ENCODE measurements at regions of chrX and their contacts with region 1.

Region 1: GRCh38 chrX:45515262-45516215 is 314.9 kb upstream of the DIPK2B start:
- DNase-seq: peak; percentile 62
- ATAC-seq: peak; percentile 66
- H3K4me3 ChIP-seq: no peak overlapping the region
- H3K27ac ChIP-seq: peak overlapping the region; percentile 91
- H3K4me1 ChIP-seq: peaks cover 32 to 62% of the 10 kb centered on the region in 2 experiments
- H3K27me3 ChIP-seq: no peaks in the 10 kb centered on the region
- CTCF ChIP-seq: peak in 2 of 3 experiments; percentile 55 to 63; a peak in 4 of 6 replicates
- POLR2A ChIP-seq: no peak
- RAD21 ChIP-seq: no peak

Region 2: GRCh38 chrX:45322382-45322781 is 193.2 kb before region 1 on chrX:
- CTCF ChIA-PET with region 1: interaction called, 3 read pairs
- POLR2A ChIA-PET with region 1: interaction called, 3 read pairs
- RAD21 ChIA-PET with region 1: no interaction called
- intact Hi-C with region 1: loop called (anchors 2 kb)
- DNase-seq: peak; percentile 51
- ATAC-seq: peak; percentile 49
- H3K4me3 ChIP-seq: no peak overlapping the region
- H3K27ac ChIP-seq: peak overlapping the region; percentile 76; the same call in 1 of the 2 replicates
- H3K4me1 ChIP-seq: peaks cover 8 to 31% of the 10 kb centered on the region in 2 experiments; a peak in 3 of 4 replicates
- H3K27me3 ChIP-seq: no peaks in the 10 kb centered on the region
- CTCF ChIP-seq: peak; percentile 19 to 40 (median 22); a peak in 3 of 6 replicates
- POLR2A ChIP-seq: no peak
- RAD21 ChIP-seq: peak; percentile 81

Region 3: GRCh38 chrX:45743081-45743533 is 227.6 kb after region 1 on chrX:
- CTCF ChIA-PET with region 1: interaction called, 3 read pairs
- POLR2A ChIA-PET with region 1: interaction called, 7 read pairs
- RAD21 ChIA-PET with region 1: no interaction called
- intact Hi-C with region 1: loop called (anchors 2 kb)
- DNase-seq: peak; percentile 76
- ATAC-seq: peak; percentile 79
- H3K4me3 ChIP-seq: no peak overlapping the region
- H3K27ac ChIP-seq: peak overlapping the region; percentile 94
- H3K4me1 ChIP-seq: peaks cover 12 to 63% of the 10 kb centered on the region in 2 experiments
- H3K27me3 ChIP-seq: no peaks in the 10 kb centered on the region
- CTCF ChIP-seq: peak in 2 of 3 experiments; percentile 46 to 50; a peak in 4 of 6 replicates
- POLR2A ChIP-seq: no peak
- RAD21 ChIP-seq: no peak

Region 4: GRCh38 chrX:45824471-45824870 is 308.9 kb after region 1 on chrX:
- CTCF ChIA-PET with region 1: no interaction called
- POLR2A ChIA-PET with region 1: no interaction called
- RAD21 ChIA-PET with region 1: no interaction called
- intact Hi-C with region 1: loop called (anchors 1 kb)
- DNase-seq: peak; percentile 89
- ATAC-seq: peak; percentile 84
- H3K4me3 ChIP-seq: no peak overlapping the region
- H3K27ac ChIP-seq: peak overlapping the region; percentile 57; the same call in 1 of the 2 replicates
- H3K4me1 ChIP-seq: peaks cover 40 to 94% of the 10 kb centered on the region in 2 experiments
- H3K27me3 ChIP-seq: no peaks in the 10 kb centered on the region
- CTCF ChIP-seq: peak; percentile 31 to 72 (median 71); a peak in 5 of 6 replicates
- POLR2A ChIP-seq: no peak
- RAD21 ChIP-seq: peak; percentile 75

Region 5: DNA sequence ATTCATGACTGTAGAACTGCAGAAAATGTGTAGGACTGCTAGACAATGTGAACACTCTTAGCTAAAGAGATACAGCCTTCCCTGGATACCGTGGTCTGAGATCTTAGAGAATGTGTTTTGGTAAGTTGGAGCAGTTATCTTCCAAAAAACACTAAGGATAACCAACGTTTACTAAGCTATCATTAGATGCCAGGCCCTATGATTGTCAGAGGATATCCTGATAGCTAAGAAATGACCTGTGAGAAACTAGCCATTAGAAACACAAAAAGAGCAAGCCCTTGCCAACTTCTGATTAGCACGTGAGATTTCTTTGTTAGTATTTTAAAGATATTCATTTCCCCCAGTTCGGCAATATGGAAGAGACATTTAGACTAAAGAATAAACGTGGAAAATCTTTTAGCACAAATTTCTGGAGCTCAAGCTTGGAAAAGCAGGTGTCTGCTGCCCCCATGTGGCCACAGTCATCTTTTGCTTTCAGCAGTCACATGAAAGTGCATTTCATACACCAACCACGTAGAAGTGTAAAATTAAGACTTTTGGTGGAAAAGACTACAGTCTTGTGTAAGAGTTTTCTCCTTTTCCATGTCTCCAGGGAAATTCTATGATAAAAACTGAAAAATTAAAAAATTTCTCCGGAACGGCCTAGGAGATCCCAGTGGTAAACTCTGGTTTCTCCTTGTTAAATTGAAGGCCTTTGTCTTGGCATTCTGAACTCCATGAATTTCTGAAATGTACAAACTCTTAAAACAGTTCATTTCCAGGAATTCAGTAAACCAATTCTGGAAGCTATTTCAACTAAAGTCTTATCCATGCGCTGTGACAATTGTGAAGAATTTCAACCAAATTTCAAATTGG is 893.2 kb after region 1 on chrX:
- CTCF ChIA-PET with region 1: interaction called, 8 read pairs
- POLR2A ChIA-PET with region 1: no interaction called
- RAD21 ChIA-PET with region 1: no interaction called
- intact Hi-C with region 1: loop called (anchors 2 kb)
- DNase-seq: peak; percentile 42
- ATAC-seq: peak; percentile 49; the same call in 1 of the 2 replicates
- H3K4me3 ChIP-seq: no peak overlapping the region
- H3K27ac ChIP-seq: peak overlapping the region; percentile 39; the same call in 1 of the 2 replicates
- H3K4me1 ChIP-seq: peaks cover 0 to 12% of the 10 kb centered on the region in 2 experiments; a peak in 2 of 4 replicates
- H3K27me3 ChIP-seq: no peaks in the 10 kb centered on the region
- CTCF ChIP-seq: peak; percentile 53 to 74 (median 53); a peak in 5 of 6 replicates
- POLR2A ChIP-seq: no peak
- RAD21 ChIP-seq: peak; percentile 85